ENCODE measurements at regions of chr13 and their contacts with region 1.

Region 1: DNA sequence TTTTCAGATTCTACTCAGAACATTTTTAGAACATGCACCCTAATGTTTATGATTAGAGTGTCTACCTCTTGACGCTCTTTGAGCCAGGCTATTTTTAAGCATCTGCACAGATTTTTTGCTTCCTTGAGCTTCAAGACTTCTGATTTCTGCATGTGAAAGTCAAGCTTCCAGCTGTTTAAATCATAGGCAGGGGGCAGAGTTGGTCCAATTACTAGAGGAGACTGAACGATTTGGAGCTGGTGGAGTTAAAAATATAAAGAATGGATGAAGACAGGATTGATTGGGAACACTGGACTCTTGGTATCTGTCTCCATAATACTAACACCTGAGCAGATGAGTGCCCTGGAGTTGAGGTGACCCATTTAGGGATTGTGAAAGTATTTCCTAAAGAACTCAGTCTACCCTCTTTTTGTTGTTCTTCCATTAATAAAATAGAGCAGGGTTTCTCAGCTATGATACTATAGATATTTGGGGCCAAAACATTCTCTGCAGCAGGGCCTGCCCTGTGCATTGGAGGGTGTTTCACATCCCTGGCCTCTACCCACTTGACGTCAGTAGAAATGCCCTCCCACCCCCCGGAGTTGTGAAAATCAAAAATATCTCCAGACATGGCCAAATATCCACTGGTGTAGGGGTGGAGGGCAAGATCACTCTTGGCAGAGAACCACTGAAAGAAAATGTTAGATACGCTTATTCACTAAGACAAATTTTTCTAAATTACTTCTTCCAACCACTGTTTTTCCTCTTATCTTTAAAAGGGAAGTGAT is 160.1 kb downstream of the COG6 start:
- DNase-seq: peak; percentile 42 to 60 (median 54)
- H3K4me3 ChIP-seq: no peak overlapping the region
- H3K27ac ChIP-seq: peak overlapping the region in 1 of 2 donors; percentile 80
- H3K4me1 ChIP-seq: peaks cover 15% of the 10 kb centered on the region
- H3K27me3 ChIP-seq: no peaks in the 10 kb centered on the region
- CTCF ChIP-seq: peak in 2 of 3 donors; percentile 18 to 31
- EP300 ChIP-seq: no peak
- POLR2A ChIP-seq: no peak

Region 2: GRCh38 chr13:39364947-39365484 is 450.5 kb before region 1 on chr13:
- intact Hi-C with region 1: no loop called
- DNase-seq: no peak
- H3K4me3 ChIP-seq: peak overlapping the region; percentile 7
- H3K27ac ChIP-seq: no peak overlapping the region
- H3K4me1 ChIP-seq: peaks cover 7% of the 10 kb centered on the region
- H3K27me3 ChIP-seq: no peaks in the 10 kb centered on the region
- CTCF ChIP-seq: no peak
- EP300 ChIP-seq: no peak
- POLR2A ChIP-seq: no peak

Region 3: GRCh38 chr13:39740783-39741182 is 74.7 kb before region 1 on chr13:
- intact Hi-C with region 1: no loop called
- DNase-seq: no peak
- H3K4me3 ChIP-seq: no peak overlapping the region
- H3K27ac ChIP-seq: no peak overlapping the region
- H3K4me1 ChIP-seq: no peaks in the 10 kb centered on the region
- H3K27me3 ChIP-seq: no peaks in the 10 kb centered on the region
- CTCF ChIP-seq: no peak
- EP300 ChIP-seq: no peak
- POLR2A ChIP-seq: no peak

Region 4: DNA sequence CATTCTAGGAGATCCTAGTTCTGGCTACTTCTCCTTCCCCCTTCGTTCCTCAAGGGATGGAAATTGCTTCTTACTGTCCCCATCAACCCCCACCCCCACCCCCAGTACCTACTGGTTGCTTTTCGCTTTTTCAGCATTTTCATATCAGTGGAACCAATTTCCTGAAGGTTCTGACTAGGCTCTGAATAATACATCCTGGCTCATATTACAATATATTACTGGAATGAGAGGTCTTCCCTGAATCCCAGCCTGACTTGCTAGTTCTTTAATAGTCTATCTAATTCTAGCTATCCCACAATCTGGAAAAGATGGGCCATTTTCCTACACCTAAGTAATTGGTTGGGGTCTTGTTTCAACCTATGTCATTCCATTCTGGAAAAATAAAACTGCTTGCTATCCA is 47.4 kb after region 1 on chr13:
- intact Hi-C with region 1: no loop called
- DNase-seq: no peak
- H3K4me3 ChIP-seq: no peak overlapping the region
- H3K27ac ChIP-seq: no peak overlapping the region
- H3K4me1 ChIP-seq: no peaks in the 10 kb centered on the region
- H3K27me3 ChIP-seq: no peaks in the 10 kb centered on the region
- CTCF ChIP-seq: no peak
- EP300 ChIP-seq: no peak
- POLR2A ChIP-seq: no peak

Region 5: GRCh38 chr13:39892721-39893685 is 77.5 kb after region 1 on chr13:
- intact Hi-C with region 1: loop called in 1 of 4 experiments (anchors 5 kb)
- DNase-seq: no peak
- H3K4me3 ChIP-seq: no peak overlapping the region
- H3K27ac ChIP-seq: peak overlapping the region in 1 of 2 donors; percentile 3
- H3K4me1 ChIP-seq: peaks cover 16% of the 10 kb centered on the region
- H3K27me3 ChIP-seq: no peaks in the 10 kb centered on the region
- CTCF ChIP-seq: no peak
- EP300 ChIP-seq: no peak
- POLR2A ChIP-seq: no peak

Region 6: GRCh38 chr13:39900106-39900750 is 84.7 kb after region 1 on chr13:
- intact Hi-C with region 1: loop called in 2 of 4 experiments (anchors 5 kb)
- DNase-seq: peak in 1 of 5 donors; percentile 48
- H3K4me3 ChIP-seq: no peak overlapping the region
- H3K27ac ChIP-seq: peak overlapping the region; percentile 40 to 81
- H3K4me1 ChIP-seq: peaks cover 12% of the 10 kb centered on the region
- H3K27me3 ChIP-seq: no peaks in the 10 kb centered on the region
- CTCF ChIP-seq: no peak
- EP300 ChIP-seq: no peak
- POLR2A ChIP-seq: no peak

Measured in ovary (tissue), 10 donors.